HEK293 (cell line): ENCODE measurements at regions of chr10 and their contacts with region 1.

Region 1: DNA sequence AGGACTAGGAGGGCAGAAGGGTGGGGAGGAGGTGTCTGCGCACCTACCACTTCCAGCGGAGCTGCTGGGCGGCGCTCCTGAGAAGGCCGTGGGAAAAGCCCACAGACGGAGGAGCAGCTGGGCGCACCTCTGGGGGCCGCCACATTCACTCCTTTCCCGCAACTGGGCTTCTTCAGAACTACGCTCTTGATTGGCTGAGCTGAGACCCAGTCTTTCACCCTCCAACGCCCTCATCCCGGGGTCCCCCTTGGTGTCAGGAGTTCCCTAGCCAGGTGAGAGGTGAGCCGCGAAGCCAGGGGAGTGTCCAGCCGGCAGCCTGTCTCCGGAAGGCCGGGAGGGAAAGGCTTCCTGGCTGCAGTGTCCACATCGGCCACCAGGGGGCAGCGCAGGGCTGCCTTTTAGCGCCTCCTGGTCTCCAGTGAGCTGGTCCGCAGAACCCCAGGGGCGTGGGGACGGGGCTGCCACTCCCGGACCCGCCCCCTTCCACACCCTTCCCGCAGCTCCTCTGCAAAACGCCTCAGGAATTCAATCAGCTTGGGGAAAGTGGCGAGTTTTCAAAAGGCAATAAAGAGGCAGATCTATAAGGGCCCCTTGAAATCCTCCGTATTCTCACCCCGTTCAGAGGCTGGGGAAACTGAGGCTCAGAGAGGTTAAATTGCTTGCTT is 98.8 kb downstream of the CHST15 start:
- H3K4me3 ChIP-seq: peak overlapping the region; percentile 29
- H3K27ac ChIP-seq: no peak overlapping the region
- H3K4me1 ChIP-seq: no peaks in the 10 kb centered on the region; the same call in 1 of the 2 replicates
- CTCF ChIP-seq: peak; percentile 97

Region 2: GRCh38 chr10:123974406-123974805 is 20.1 kb before region 1 on chr10:
- CTCF ChIA-PET with region 1: interaction called, 13 read pairs
- POLR2A ChIA-PET with region 1: no interaction called
- H3K4me3 ChIP-seq: no peak overlapping the region
- H3K27ac ChIP-seq: no peak overlapping the region
- H3K4me1 ChIP-seq: no peaks in the 10 kb centered on the region
- CTCF ChIP-seq: no peak

Region 3: DNA sequence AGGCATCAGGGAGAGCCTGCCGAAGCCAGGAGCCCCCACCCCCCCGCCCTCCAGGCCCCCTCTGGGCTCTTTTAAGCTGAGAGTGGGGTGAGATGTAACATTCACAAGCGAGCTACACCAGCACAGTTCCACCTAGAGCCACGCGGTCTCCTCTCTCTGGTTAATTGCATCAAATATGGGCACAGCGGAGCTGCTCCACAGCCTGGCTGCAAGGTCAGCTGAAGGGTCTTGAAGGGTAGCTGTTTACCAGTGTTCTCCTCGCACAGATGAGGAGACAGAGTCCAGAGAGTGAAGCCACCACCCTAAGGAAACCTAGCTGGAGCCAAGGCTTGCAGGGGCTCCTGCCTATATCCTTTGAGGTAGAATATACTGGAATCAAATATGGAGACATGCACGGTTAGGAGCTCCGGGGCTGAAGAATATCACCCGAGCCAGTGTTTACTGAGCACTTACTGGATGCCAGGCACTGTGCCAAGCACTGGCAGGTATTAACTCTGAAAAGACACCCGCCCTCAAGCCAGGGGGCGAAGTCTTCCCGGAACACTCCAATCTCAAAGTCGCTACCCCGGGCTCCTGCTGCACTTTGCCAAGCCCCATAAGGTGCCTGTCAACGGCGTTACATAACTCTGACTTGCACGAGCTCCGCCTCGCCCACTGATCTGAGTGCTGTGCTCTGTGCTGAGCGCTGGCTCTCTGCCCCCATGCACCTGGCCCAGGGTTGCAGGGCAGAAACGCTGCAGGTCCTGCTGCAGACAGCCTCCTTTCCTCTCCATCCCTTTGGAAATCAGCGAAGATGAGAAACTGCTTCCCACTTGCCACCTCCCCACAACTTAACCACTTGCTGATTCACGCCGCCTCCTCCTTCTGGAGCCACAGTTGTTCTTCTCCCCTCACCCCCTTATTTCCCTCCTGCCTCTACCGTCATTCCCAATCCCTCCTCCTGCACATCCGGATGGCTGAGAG is 93.4 kb after region 1 on chr10:
- CTCF ChIA-PET with region 1: interaction called, 17 read pairs
- POLR2A ChIA-PET with region 1: interaction called, 8 read pairs
- H3K4me3 ChIP-seq: no peak overlapping the region
- H3K27ac ChIP-seq: no peak overlapping the region; the same call in 1 of the 2 replicates
- H3K4me1 ChIP-seq: peaks cover 18% of the 10 kb centered on the region
- CTCF ChIP-seq: no peak

Region 4: DNA sequence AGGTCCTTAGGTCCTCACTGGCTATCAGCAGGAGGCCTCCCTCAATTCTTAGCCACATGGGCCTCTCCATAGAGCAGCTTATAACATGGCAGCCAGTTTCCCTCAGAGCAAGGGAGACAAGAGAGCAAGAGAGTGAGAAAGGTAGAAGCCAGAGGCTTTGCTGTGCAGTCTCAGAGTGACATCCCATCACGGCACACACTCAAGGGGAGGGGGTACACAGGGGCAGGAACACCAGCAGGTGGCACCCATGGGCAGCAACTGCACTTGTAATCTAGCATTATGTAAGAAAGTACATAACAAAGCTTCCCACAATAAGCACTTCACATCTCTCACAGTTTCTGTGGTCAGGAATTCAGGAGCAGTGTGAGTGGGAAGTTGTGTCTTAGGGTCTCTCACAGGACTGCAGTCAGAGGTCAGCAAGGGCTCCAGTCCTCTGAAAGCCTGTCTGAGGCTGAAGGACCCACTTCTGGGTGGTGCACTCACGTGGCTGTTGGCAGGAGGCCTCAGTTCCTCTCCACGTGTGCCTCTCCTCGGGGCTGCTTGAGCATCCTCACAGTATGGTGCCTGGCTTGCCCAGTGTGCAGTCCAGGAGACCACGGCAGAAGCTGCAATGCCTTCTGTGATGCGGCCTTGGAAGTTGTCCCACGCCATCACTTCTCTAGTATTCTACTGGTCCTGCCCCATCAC is 264.7 kb after region 1 on chr10:
- CTCF ChIA-PET with region 1: interaction called, 11 read pairs
- POLR2A ChIA-PET with region 1: no interaction called
- H3K4me3 ChIP-seq: no peak overlapping the region
- H3K27ac ChIP-seq: no peak overlapping the region
- H3K4me1 ChIP-seq: no peaks in the 10 kb centered on the region
- CTCF ChIP-seq: no peak

Region 5: DNA sequence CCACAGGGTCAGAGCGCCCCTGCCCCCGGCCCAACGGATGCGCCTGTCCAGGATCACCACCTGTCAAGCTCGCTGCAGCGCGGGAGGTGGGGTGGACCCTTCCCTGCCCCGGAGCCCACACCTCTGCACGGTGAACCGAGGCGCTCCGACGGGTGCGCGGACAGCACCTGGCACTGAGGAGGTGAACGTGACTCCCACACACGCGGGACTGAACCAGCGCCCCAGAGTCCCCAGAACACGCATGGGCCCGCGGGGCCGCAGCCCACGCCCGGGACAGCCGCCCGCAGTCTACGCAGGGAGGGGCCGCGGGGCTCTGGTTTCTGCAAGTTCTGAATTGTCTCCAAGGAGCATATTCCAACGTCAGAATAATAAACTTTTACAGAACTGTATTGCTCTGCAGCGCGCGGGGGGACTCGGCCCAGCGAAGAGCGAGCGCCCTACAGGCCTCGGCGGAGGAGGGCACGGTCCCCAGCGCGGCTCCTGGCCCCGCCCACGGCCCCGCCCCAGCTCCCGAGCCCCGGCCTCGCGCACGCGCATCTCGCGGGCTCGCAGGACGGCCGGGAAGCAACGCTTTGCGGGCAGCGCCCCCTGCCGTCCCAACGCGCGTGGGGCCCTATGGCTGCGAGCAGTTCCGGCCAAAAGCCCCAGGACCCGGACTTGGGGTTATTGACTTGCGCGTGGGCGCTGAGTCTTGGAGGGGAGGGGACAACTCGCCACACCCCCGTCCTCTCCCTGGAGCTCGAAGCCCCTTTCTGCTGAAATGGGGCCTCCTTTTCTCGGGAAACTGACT is 394.5 kb after region 1 on chr10:
- CTCF ChIA-PET with region 1: interaction called, 160 read pairs
- POLR2A ChIA-PET with region 1: interaction called, 14 read pairs
- H3K4me3 ChIP-seq: no peak overlapping the region
- H3K27ac ChIP-seq: no peak overlapping the region; the same call in 1 of the 2 replicates
- H3K4me1 ChIP-seq: no peaks in the 10 kb centered on the region; the same call in 1 of the 2 replicates
- CTCF ChIP-seq: peak; percentile 74; the same call in 1 of the 2 replicates

Region 6: DNA sequence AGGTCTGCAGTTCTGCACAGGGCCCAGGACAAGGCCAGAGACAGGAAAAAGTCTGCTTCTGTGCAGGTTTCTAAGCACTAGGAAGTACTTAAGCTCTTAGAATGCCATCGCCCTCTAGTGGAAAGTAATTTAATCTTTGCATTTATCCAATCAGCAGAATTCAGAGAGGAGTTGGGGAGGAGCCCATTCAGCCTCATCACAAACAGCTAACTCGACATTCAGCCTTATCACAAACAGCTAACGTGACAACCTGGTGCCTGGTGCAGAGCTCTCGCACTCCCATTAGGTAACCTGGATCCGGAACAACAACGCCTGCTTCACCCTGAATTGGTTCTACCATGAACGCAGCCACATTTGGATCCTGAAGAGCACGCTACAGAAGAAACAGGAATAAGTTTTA is 409.0 kb after region 1 on chr10:
- CTCF ChIA-PET with region 1: interaction called, 17 read pairs
- POLR2A ChIA-PET with region 1: no interaction called
- H3K4me3 ChIP-seq: no peak overlapping the region
- H3K27ac ChIP-seq: no peak overlapping the region
- H3K4me1 ChIP-seq: no peaks in the 10 kb centered on the region
- CTCF ChIP-seq: 0 out of 2 replicates have a peak, but pooled peaks have one; percentile 27